PC-3 (cell line): ENCODE measurements at regions of chr4 and their contacts with region 1.

Region 1: GRCh38 chr4:53459548-53459947 is 82.1 kb downstream of the FIP1L1 start:
- DNase-seq: peak; percentile 64
- ATAC-seq: peak; percentile 68
- H3K4me3 ChIP-seq: no peak overlapping the region
- H3K27ac ChIP-seq: peak overlapping the region; percentile 12
- H3K4me1 ChIP-seq: peaks cover 57% of the 10 kb centered on the region
- H3K27me3 ChIP-seq: no peaks in the 10 kb centered on the region
- CTCF ChIP-seq: no peak

Region 2: DNA sequence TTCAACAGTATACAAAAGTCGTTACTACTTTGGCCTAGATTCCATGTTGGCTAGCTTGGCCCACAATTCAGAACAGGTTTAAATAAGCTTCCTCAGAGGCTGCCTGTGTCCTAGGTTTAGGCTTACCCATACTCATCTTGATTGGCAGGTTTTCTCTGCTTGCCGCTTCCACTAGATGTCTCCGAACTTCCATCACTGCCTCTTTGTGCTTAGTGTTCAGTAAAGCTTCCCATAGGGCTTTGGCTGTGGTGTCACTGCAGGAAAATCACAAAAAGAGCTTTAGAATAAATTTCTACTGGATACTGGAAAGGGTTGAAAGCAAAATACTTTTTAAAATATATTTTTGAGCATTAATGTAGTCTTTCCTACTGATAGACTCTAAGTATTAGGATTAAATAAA is 146.0 kb before region 1 on chr4:
- CTCF ChIA-PET with region 1: no interaction called
- POLR2A ChIA-PET with region 1: no interaction called
- intact Hi-C with region 1: loop called (anchors 5 kb)
- DNase-seq: peak; percentile 53
- ATAC-seq: peak; percentile 85
- H3K4me3 ChIP-seq: no peak overlapping the region
- H3K27ac ChIP-seq: no peak overlapping the region
- H3K4me1 ChIP-seq: no peaks in the 10 kb centered on the region
- H3K27me3 ChIP-seq: no peaks in the 10 kb centered on the region
- CTCF ChIP-seq: peak; percentile 57